WTC11 (cell line): ENCODE measurements at regions of chr2 and their contacts with region 1.

Region 1: DNA sequence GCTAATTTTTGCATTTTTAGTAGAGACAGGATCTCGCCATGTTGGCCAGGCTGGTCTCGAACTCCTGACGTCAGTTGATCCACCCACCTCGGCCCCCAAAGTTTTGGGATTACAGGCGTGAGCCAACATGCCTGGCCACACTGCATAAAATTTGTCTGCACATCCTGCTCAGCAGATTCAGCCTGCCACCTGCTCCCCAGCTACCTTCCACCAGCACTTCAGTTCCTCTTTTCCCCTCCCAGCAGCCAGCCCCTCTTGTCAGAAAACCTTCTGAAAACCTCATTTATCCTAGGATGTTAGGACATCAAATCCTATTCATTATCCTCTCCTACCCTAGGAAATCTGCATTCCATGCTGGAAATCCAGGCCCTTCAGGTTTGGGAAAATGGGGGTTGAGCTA is 99.4 kb upstream of the STPG4 start:
- DNase-seq: no peak
- ATAC-seq: no peak
- H3K4me3 Mint-ChIP-seq: no peak overlapping the region
- H3K27ac Mint-ChIP-seq: 0 out of 2 replicates have a peak overlapping the region, but pooled peaks have one; percentile 7
- H3K4me1 Mint-ChIP-seq: peaks cover 15% of the 10 kb centered on the region
- H3K27me3 Mint-ChIP-seq: no peaks in the 10 kb centered on the region
- CTCF ChIP-seq: no peak

Region 2: GRCh38 chr2:47173986-47174732 is 80.3 kb before region 1 on chr2:
- CTCF ChIA-PET with region 1: no interaction called
- POLR2A ChIA-PET with region 1: no interaction called
- DNase-seq: no peak
- ATAC-seq: no peak
- H3K4me3 Mint-ChIP-seq: peak overlapping the region; percentile 92
- H3K27ac Mint-ChIP-seq: no peak overlapping the region
- H3K4me1 Mint-ChIP-seq: peaks cover 75% of the 10 kb centered on the region
- H3K27me3 Mint-ChIP-seq: peaks cover 3% of the 10 kb centered on the region; the same call in 1 of the 2 replicates
- CTCF ChIP-seq: no peak

Region 3: GRCh38 chr2:47265751-47266231 is 11.3 kb after region 1 on chr2:
- CTCF ChIA-PET with region 1: interaction called, 13 read pairs
- POLR2A ChIA-PET with region 1: no interaction called
- DNase-seq: no peak
- ATAC-seq: peak; percentile 8
- H3K4me3 Mint-ChIP-seq: no peak overlapping the region
- H3K27ac Mint-ChIP-seq: peak overlapping the region; percentile 6; the same call in 1 of the 2 replicates
- H3K4me1 Mint-ChIP-seq: peaks cover 39% of the 10 kb centered on the region
- H3K27me3 Mint-ChIP-seq: no peaks in the 10 kb centered on the region
- CTCF ChIP-seq: no peak